ENCODE measurements at regions of chr9 and their contacts with region 1.

Region 1: GRCh38 chr9:131464354-131465000 is 38.2 kb upstream of the POMT1 start:
- H3K4me3 ChIP-seq: no peak overlapping the region
- H3K27ac ChIP-seq: no peak overlapping the region
- H3K4me1 ChIP-seq: no peaks in the 10 kb centered on the region
- CTCF ChIP-seq: no peak

Region 2: DNA sequence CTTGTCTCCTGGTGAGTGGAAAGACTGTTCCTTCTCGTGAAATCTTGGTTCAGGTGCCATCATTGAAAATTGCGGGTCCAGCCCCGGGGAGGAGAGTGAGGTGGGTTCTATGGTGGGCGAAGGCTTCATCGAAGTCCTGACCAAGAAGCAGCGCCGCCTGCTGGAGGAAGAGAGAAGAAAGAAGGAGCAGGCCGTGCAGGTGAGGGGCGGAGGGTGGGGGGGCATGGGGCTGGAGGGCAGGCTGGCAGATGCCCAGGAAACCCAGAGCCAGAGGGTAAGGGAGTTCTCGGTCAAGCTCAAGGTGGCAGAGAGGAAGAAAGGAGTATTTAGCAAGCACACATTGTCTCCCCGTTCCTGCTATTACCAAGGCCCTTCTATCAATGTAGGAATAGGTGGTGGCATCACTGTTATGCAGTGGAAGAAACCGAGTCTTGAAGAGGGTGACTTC is 14.0 kb after region 1 on chr9:
- CTCF ChIA-PET with region 1: interaction called, 12 read pairs
- POLR2A ChIA-PET with region 1: interaction called, 5 read pairs
- H3K4me3 ChIP-seq: no peak overlapping the region
- H3K27ac ChIP-seq: no peak overlapping the region
- H3K4me1 ChIP-seq: no peaks in the 10 kb centered on the region
- CTCF ChIP-seq: 0 out of 2 replicates have a peak, but pooled peaks have one; percentile 16

Measured in HEK293 (cell line).